ENCODE measurements at regions of chr9 and their contacts with region 1.

Region 1: GRCh38 chr9:136619742-136620440 is 42.8 kb upstream of the EGFL7 start:
- DNase-seq: peak in 38 of 42 donors; percentile 26 to 83 (median 55)

Region 2: DNA sequence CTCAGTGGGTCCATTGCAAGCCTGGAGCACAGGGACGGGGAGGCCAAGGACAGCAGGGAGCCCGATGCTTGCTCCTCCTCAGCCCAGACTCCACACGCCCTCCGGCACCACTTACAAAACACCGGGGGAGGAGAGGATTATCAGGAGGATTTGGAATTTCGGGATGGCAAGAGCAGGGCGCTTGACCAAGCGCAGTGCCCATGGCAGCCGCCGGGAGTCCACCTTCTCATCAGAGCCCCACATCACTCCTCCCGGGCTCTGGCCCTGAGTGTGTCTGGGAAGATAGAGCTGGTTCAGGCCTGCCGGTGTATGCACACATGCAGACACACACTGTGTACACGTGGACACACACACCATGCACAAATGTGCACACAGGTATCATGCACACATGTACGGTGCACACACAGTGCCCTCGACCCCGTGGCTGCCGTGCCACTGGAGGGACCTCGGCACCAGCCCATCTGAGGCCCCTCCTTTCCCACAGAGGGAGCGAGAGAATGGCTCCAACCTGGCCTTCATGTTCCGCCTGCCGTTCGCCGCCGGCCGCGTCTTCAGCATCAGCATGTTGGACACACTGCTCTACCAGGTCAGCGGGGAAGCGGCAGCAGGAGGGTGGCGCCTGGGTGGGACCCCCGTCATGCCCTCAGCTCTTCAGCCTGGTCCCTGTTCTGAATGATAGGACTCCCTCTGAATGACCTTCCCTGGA is 836.2 kb before region 1 on chr9:
- intact Hi-C with region 1: no loop called
- DNase-seq: no peak

Region 3: GRCh38 chr9:136551401-136552116 is 68.3 kb before region 1 on chr9:
- intact Hi-C with region 1: loop called (anchors 5 kb)
- DNase-seq: peak in 13 of 42 donors; percentile 36 to 85 (median 60)